ENCODE measurements at regions of chr2 and their contacts with region 1.

Region 1: DNA sequence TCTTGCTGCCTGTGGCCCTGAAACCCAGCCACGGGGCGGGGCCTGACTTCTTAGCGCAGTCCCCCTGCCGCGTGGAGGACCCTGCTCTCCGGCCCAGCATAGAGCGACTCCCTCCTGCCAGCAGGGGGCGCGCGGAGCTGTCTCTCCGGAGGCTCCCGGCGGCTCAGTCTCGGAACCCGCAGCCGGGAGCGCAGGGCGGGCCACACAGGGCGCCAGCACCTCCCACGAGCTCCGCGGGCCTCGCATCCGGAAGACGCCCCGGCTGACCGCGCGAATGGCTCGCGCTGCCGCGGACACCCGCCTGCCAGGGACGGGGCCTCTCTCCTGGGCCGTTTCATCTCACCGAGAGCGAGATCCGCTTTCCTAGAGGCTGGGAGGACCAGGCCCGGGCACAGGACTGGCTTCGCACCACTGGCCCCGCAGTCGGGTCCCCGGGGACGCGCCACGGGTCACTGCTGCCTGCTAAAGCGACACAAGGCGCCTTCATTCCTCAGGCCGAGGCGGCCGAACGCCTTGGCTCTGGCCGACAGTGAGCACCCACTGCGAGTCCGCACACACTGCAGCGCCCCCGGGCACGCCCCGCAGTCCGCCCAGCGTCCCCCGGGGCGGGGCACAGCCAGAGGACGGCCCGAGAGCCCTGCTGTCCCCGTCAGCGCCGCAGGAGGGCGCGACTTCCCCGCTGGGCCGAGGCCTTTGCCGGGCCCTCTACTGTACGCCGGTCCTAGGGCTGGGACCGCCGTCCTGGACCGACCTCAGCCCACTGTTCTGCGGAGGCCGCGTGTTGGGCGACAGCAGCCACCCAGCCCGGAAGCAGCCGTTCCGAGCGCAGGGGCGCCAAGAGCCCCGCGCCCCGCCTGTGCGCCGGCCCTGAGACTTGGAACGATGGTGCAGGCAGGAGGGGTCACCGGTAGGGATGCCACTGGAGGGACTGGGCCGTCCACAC is 39.0 kb upstream of the ARHGEF4 start:
- DNase-seq: peak; percentile 95
- ATAC-seq: peak; percentile 95

Region 2: GRCh38 chr2:130873700-130874346 is 76.1 kb after region 1 on chr2:
- intact Hi-C with region 1: loop called (anchors 5 kb)
- DNase-seq: peak; percentile 87
- ATAC-seq: peak; percentile 77

Measured in sciatic nerve (tissue), 2 donors.